Aorta (tissue), 5 donors: ENCODE measurements at regions of chrX and their contacts with region 1.

Region 1: GRCh38 chrX:40013266-40014195 is 84.2 kb downstream of the BCOR start:
- DNase-seq: peak; percentile 80 to 88
- ATAC-seq: peak; percentile 68
- H3K4me3 ChIP-seq: peak overlapping the region; percentile 38 to 52
- H3K27ac ChIP-seq: peak overlapping the region in 1 of 2 donors; percentile 83
- H3K4me1 ChIP-seq: no peaks in the 10 kb centered on the region
- H3K27me3 ChIP-seq: no peaks in the 10 kb centered on the region

Region 2: GRCh38 chrX:39633293-39633692 is 380.2 kb before region 1 on chrX:
- intact Hi-C with region 1: no loop called
- DNase-seq: no peak
- ATAC-seq: no peak
- H3K4me3 ChIP-seq: no peak overlapping the region
- H3K27ac ChIP-seq: no peak overlapping the region
- H3K4me1 ChIP-seq: no peaks in the 10 kb centered on the region
- H3K27me3 ChIP-seq: no peaks in the 10 kb centered on the region

Region 3: GRCh38 chrX:39721566-39722279 is 291.8 kb before region 1 on chrX:
- intact Hi-C with region 1: loop called in 1 of 2 experiments (anchors 5 kb)
- DNase-seq: no peak
- ATAC-seq: peak; percentile 62
- H3K4me3 ChIP-seq: no peak overlapping the region
- H3K27ac ChIP-seq: peak overlapping the region in 1 of 2 donors; percentile 89
- H3K4me1 ChIP-seq: peaks cover 0 to 3% of the 10 kb centered on the region in 2 donors
- H3K27me3 ChIP-seq: no peaks in the 10 kb centered on the region

Region 4: GRCh38 chrX:39814391-39814790 is 199.1 kb before region 1 on chrX:
- intact Hi-C with region 1: loop called in 1 of 2 experiments (anchors 10 kb)
- DNase-seq: no peak
- ATAC-seq: no peak
- H3K4me3 ChIP-seq: no peak overlapping the region
- H3K27ac ChIP-seq: no peak overlapping the region
- H3K4me1 ChIP-seq: no peaks in the 10 kb centered on the region
- H3K27me3 ChIP-seq: no peaks in the 10 kb centered on the region

Region 5: DNA sequence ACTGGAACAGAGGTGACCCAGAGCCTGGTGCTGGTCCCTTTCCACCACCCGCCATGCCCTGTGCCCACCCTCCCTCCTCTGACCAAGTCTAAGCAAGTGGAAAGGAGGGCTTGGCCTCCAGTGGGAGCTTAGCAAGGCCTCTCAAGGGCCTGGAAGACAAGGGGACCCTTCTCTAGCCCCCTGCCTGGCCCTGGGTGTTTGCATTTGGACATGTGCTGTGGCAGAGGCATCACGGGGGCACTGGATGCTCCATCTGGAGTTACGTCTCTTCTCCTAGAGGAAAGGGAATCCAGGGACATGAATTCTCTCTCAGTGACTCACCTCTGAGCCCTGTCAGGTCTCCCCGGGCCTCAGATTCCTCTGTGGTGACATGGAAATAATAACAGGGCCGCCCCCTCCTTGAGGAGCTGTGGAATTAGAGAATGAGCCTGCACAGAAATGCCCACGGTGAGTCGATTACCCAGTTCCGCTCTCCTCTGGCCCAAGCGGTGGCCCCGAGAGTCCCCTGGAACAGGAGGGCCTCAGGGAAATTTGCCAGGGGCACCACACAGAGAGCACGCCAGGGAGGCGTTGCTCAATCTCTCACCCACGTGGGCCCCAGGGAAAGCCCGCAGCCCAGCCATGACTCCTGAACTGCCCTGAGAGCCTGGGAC is 105.4 kb before region 1 on chrX:
- intact Hi-C with region 1: loop called in 1 of 2 experiments (anchors 5 kb)
- DNase-seq: peak; percentile 85 to 90
- ATAC-seq: peak; percentile 55
- H3K4me3 ChIP-seq: no peak overlapping the region
- H3K27ac ChIP-seq: peak overlapping the region in 1 of 2 donors; percentile 89
- H3K4me1 ChIP-seq: no peaks in the 10 kb centered on the region
- H3K27me3 ChIP-seq: no peaks in the 10 kb centered on the region

Region 6: DNA sequence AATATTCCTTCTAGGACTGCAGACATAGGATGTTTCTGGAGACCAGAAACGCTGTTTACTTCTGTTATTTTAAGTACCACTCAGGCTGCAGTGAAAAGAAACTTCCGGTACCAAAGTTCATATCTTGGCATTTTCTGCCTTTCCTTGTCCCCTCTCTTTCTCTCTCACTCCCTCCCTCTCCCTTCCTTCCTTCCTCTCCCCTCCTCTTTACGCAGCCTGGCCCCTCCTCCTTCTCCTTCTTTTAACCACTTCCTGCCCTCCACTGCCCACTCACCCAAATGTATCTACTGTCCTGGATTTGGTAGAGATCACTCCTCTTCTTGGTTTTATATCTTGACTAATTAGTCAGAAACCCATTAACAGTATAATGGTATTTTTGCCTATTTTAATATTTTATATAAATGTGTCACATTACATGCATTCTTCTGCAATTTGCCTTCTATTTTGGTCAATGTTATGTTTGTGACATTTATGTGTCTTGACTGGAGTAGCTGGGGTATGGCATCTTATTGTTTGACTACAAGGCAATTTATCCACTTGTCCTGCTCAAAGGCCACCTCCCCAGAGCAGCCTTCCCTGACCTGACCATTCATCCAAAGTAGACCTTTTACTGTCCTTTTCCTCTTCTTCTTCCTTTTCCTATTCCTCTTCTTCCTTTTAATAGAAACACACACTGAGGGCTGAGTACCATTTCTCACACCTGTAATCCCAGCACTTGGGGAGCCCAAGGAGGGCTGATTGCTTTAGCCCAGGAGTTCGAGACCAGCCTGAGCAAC is 27.3 kb after region 1 on chrX:
- intact Hi-C with region 1: no loop called
- DNase-seq: peak in 1 of 2 donors; percentile 10
- ATAC-seq: no peak
- H3K4me3 ChIP-seq: no peak overlapping the region
- H3K27ac ChIP-seq: no peak overlapping the region
- H3K4me1 ChIP-seq: no peaks in the 10 kb centered on the region
- H3K27me3 ChIP-seq: no peaks in the 10 kb centered on the region

Region 7: DNA sequence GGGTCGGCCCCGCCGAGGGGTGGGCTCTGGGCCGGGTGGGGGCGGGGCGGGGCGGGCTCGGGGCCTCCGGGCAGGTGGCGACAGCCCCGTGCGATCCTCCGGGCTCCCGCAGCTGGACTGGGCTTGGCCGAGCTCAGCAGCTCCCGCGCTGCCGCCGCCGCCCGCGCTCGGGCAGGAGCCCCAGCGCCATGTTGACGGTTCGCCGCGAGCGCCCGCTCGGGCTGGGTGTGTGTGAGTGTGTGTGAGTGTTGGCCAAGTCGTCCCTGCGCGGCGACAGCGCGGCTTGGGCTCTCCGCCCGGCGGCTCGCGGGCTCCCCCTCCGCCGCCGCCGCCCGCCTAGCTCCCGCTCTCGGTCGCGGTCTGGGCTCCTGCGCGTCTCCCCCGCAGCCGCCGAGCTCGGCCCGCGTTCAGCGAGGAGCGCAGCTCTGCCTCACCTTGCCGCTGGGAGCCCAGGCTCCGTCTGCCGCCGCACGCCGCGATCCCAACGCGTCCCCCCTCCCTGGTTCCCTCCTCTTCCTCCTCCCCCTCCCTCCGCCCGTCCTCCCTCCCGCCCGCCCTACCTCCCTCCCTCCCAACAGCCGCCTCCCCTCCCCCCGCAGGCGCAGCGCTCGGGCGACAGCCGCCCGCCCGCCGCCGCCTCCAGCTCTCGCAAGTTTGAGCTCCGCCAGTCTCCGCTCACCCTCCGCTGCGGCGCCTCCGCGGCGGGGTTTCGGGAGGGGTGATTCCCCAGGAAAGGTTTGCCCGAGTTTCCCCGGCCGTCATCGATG is 84.1 kb after region 1 on chrX and contains the start of gene BCOR:
- intact Hi-C with region 1: loop called in 1 of 2 experiments (anchors 10 kb)
- DNase-seq: peak; percentile 86 to 91
- ATAC-seq: peak; percentile 58
- H3K4me3 ChIP-seq: peak within 1 kb of the TSS; percentile 55 to 86
- H3K27ac ChIP-seq: peak within 1 kb of the TSS; percentile 30 to 87
- H3K4me1 ChIP-seq: no peaks in the 10 kb centered on the region
- H3K27me3 ChIP-seq: peaks cover 0 to 2% of the 10 kb centered on the region in 2 donors
- total RNA-seq, gene BCOR: 22.6 to 46.7 TPM

Region 8: GRCh38 chrX:40153335-40154249 is 140.1 kb after region 1 on chrX:
- intact Hi-C with region 1: loop called (anchors 10 kb)
- DNase-seq: peak; percentile 71 to 82
- ATAC-seq: peak; percentile 15
- H3K4me3 ChIP-seq: peak overlapping the region; percentile 31 to 38
- H3K27ac ChIP-seq: no peak overlapping the region
- H3K4me1 ChIP-seq: no peaks in the 10 kb centered on the region
- H3K27me3 ChIP-seq: peaks cover 0 to 2% of the 10 kb centered on the region in 2 donors